Panc1 (cell line): ENCODE measurements at regions of chr7 and their contacts with region 1.

Region 1: DNA sequence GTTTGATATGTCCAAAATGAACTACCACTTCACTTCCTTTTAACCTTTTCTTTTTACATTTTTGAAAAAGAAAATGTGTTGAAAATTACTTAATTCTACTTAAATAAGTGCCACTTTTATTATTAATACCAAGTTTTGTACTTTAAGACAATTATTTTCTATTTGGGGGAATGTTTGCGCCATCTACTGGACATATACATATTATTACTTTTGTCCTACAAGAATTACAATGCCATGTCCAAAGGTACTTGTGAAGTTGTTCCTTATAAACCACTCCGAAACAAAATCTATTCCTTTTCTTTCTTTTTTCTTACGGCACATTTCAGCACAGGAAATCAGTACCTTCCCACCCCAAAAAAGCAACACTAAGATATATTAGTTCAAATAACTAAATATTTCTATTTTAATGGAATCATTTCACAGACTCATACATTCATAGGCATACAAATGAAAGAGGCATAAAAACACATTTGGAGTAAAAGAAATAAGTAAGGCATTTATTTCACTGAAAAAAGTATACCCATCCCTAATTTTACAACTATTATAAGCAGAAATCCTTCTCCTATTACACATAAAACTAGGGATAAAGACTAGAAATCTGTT is 169.9 kb downstream of the RNF133 start:
- DNase-seq: peak; percentile 17
- ATAC-seq: no peak
- H3K4me3 ChIP-seq: no peak overlapping the region
- H3K27ac ChIP-seq: no peak overlapping the region
- H3K4me1 ChIP-seq: no peaks in the 10 kb centered on the region
- H3K27me3 ChIP-seq: no peaks in the 10 kb centered on the region
- CTCF ChIP-seq: peak; percentile 50; the same call in 1 of the 2 replicates

Region 2: GRCh38 chr7:122014697-122015096 is 514.3 kb before region 1 on chr7:
- CTCF ChIA-PET with region 1: no interaction called
- POLR2A ChIA-PET with region 1: no interaction called
- in situ Hi-C with region 1: no loop called
- intact Hi-C with region 1: loop called (anchors 10 kb)
- DNase-seq: no peak
- ATAC-seq: no peak
- H3K4me3 ChIP-seq: no peak overlapping the region
- H3K27ac ChIP-seq: no peak overlapping the region
- H3K4me1 ChIP-seq: no peaks in the 10 kb centered on the region
- H3K27me3 ChIP-seq: peaks cover 2% of the 10 kb centered on the region
- CTCF ChIP-seq: no peak; the same call in 1 of the 2 replicates

Region 3: GRCh38 chr7:122092964-122093797 is 435.8 kb before region 1 on chr7:
- CTCF ChIA-PET with region 1: interaction called, 3 read pairs
- POLR2A ChIA-PET with region 1: no interaction called
- in situ Hi-C with region 1: no loop called
- intact Hi-C with region 1: loop called (anchors 5 kb)
- DNase-seq: peak; percentile 64
- ATAC-seq: no peak
- H3K4me3 ChIP-seq: no peak overlapping the region
- H3K27ac ChIP-seq: no peak overlapping the region
- H3K4me1 ChIP-seq: no peaks in the 10 kb centered on the region
- H3K27me3 ChIP-seq: no peaks in the 10 kb centered on the region
- CTCF ChIP-seq: peak; percentile 76

Region 4: GRCh38 chr7:122143751-122144711 is 384.9 kb before region 1 on chr7 and contains the start of gene AASS:
- CTCF ChIA-PET with region 1: interaction called, 11 read pairs
- POLR2A ChIA-PET with region 1: no interaction called
- in situ Hi-C with region 1: no loop called
- intact Hi-C with region 1: no loop called
- DNase-seq: peak; percentile 35
- ATAC-seq: peak; percentile 98
- H3K4me3 ChIP-seq: peak within 1 kb of the TSS; percentile 64 to 70
- H3K27ac ChIP-seq: no peak within 1 kb of the TSS
- H3K4me1 ChIP-seq: peaks cover 8% of the 10 kb centered on the region
- H3K27me3 ChIP-seq: peaks cover 12% of the 10 kb centered on the region
- CTCF ChIP-seq: no peak
- total RNA-seq, gene AASS: 0.31 TPM

Region 5: DNA sequence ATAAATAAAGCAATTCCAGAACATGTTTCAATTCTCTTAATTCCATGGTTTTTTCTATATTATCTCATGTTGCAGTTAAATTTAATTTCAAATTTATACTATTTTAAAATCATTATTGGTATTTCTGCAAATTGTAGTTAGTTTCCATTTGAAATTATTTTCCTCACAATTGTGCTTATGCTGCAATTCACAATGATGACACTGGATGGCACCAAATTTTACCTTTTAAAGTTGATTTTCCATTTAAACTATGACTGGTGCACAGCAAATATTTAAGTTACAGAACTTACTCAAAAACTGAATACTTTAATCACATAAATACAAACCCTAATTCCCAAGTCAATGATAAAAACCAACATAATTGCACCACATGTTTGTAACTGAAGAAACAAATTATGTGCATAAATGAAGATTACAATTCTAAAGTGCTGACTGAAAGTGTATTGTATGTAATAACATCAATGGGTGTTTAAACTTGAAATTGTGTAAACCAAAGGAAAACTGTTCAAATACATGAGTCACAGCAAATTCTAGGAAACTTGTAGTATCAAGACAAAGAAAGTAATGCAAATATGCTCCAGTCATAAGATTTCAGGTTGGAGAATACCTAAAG is 309.6 kb before region 1 on chr7:
- CTCF ChIA-PET with region 1: interaction called, 4 read pairs
- POLR2A ChIA-PET with region 1: no interaction called
- in situ Hi-C with region 1: no loop called
- intact Hi-C with region 1: loop called (anchors 1 kb)
- DNase-seq: peak; percentile 27
- ATAC-seq: no peak
- H3K4me3 ChIP-seq: no peak overlapping the region
- H3K27ac ChIP-seq: no peak overlapping the region
- H3K4me1 ChIP-seq: no peaks in the 10 kb centered on the region
- H3K27me3 ChIP-seq: no peaks in the 10 kb centered on the region
- CTCF ChIP-seq: peak; percentile 52; the same call in 1 of the 2 replicates

Region 6: GRCh38 chr7:122369756-122370155 is 159.2 kb before region 1 on chr7:
- CTCF ChIA-PET with region 1: no interaction called
- POLR2A ChIA-PET with region 1: no interaction called
- in situ Hi-C with region 1: no loop called
- intact Hi-C with region 1: no loop called
- DNase-seq: no peak
- ATAC-seq: no peak
- H3K4me3 ChIP-seq: no peak overlapping the region
- H3K27ac ChIP-seq: no peak overlapping the region
- H3K4me1 ChIP-seq: no peaks in the 10 kb centered on the region
- H3K27me3 ChIP-seq: no peaks in the 10 kb centered on the region
- CTCF ChIP-seq: no peak

Region 7: GRCh38 chr7:122652876-122653275 is 123.9 kb after region 1 on chr7:
- CTCF ChIA-PET with region 1: no interaction called
- POLR2A ChIA-PET with region 1: no interaction called
- in situ Hi-C with region 1: no loop called
- intact Hi-C with region 1: no loop called
- DNase-seq: no peak
- ATAC-seq: no peak
- H3K4me3 ChIP-seq: no peak overlapping the region
- H3K27ac ChIP-seq: no peak overlapping the region
- H3K4me1 ChIP-seq: no peaks in the 10 kb centered on the region
- H3K27me3 ChIP-seq: no peaks in the 10 kb centered on the region
- CTCF ChIP-seq: no peak